ENCODE measurements at regions of chr18 and their contacts with region 1.

Region 1: DNA sequence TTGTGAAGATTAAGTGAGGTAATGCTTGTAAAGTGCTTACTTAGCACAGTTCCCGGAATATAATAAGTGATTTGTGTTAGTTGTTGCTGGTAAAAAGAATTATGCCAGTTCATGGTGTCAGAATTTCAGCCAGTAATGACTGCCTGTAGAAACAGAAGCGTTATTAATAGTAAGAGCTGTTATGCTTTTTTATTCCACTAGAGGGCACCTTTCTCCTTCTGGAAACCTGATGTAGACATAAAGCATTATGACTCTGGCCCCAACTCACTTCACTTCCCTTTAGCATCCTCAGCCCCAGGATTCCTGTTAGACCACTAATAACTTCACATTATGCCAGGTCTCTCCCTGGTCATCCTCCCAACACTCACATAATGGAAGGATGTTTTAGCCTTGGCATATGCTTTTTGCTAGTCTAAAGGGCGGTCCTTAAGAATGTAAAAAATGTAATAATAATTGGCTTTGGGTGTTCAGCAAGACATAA is 34.9 kb downstream of the C18orf54 start:
- DNase-seq: peak; percentile 52
- ATAC-seq: peak; percentile 64
- H3K4me3 ChIP-seq: no peak overlapping the region
- H3K27ac ChIP-seq: no peak overlapping the region
- H3K4me1 ChIP-seq: peaks cover 25% of the 10 kb centered on the region
- H3K27me3 ChIP-seq: no peaks in the 10 kb centered on the region; a peak in 1 of 5 replicates
- CTCF ChIP-seq: peak; percentile 66
- EP300 ChIP-seq: no peak
- POLR2A ChIP-seq: no peak
- RAD21 ChIP-seq: no peak

Region 2: DNA sequence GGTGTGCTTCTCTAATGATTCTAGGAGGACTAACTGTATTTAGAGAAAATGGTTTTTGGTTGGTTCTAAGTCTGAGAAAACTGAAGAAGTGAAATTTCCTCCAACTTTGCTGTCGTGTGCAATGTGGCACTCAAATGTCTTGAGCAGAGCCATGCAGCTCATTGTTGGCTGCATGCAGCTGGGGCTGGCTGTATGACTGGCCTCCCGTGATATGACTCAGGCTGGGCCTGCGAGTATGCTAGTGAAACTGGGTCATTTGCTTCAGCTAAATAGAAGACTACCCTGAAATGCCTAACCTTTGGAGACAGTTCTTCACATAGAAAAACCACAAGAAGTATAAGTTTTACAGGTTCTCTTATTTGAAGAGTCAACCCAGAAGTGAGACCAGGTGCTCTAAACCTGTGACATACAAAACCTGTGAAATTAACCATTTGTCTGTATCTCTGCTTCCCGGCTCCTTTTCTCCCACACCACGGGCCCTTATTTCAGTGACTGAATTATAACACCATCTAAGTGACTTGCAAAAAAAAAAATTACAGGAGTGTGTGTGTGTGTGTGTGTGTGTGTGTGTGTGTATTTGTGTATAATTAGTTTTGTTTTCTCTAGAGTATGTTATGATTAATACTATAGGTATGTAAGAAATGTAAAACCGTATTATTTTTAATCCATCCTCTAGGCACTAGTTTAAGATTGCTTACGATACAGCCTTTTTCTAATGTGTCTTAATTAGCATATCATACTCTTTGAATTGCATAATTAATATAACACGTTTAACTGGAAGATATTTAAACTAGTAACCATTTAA is 107.4 kb before region 1 on chr18:
- CTCF ChIA-PET with region 1: no interaction called
- POLR2A ChIA-PET with region 1: no interaction called
- in situ Hi-C with region 1: no loop called
- intact Hi-C with region 1: no loop called
- DNase-seq: no peak
- ATAC-seq: no peak
- H3K4me3 ChIP-seq: no peak overlapping the region
- H3K27ac ChIP-seq: no peak overlapping the region
- H3K4me1 ChIP-seq: peaks cover 4% of the 10 kb centered on the region
- H3K27me3 ChIP-seq: no peaks in the 10 kb centered on the region
- CTCF ChIP-seq: no peak
- EP300 ChIP-seq: no peak
- POLR2A ChIP-seq: no peak
- RAD21 ChIP-seq: no peak

Region 3: DNA sequence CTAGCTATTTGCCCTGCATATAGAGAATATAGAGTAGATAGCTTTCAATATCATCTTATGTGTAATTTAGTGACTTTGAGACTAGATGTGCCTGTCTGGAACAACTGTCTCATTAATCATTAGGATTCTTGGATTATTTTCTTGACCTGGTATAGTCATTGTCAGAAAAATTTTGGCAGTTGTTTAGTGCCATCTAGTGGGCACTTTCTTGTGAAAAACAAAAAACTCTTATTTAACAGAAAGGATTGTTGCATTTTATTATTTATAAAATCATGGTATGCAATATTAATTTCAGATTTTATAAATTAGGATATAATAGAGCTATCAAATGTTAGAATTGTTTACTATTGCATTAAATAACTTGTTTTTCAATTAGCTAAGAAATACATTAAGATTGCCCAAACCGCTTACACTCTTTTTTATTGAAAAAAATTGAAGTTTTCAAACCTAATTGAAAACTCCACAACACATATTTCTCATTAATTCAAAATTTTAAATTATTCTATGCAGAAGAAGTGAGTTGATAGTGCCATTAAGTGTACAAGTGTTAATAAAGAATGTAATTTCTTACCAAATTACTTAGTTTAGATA is 278.8 kb after region 1 on chr18:
- CTCF ChIA-PET with region 1: no interaction called
- POLR2A ChIA-PET with region 1: no interaction called
- in situ Hi-C with region 1: no loop called
- intact Hi-C with region 1: loop called (anchors 1 kb)
- DNase-seq: peak; percentile 19
- ATAC-seq: no peak
- H3K4me3 ChIP-seq: no peak overlapping the region
- H3K27ac ChIP-seq: no peak overlapping the region
- H3K4me1 ChIP-seq: no peaks in the 10 kb centered on the region
- H3K27me3 ChIP-seq: no peaks in the 10 kb centered on the region
- CTCF ChIP-seq: peak; percentile 47
- EP300 ChIP-seq: no peak
- POLR2A ChIP-seq: no peak
- RAD21 ChIP-seq: no peak

Region 4: DNA sequence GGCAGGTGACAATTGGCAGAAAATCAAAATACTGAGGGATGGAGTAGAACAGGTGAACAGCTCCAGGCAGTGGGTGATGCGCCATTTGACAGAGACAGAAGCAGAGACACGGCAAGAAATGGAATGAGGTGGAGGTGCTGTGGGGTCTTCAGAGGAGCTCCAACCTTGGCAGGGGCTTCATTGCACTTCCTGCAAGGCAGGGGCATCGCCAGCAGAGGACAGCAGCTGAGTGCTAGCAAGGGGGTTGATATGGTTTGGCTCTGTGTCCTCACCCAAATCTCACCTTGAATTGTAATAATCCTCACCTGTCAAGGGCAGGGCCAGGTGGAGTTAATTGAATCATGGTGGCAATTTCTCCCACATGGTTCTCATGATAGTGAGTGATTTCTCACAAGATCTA is 523.9 kb after region 1 on chr18:
- CTCF ChIA-PET with region 1: no interaction called
- POLR2A ChIA-PET with region 1: no interaction called
- in situ Hi-C with region 1: no loop called
- intact Hi-C with region 1: no loop called
- DNase-seq: no peak
- ATAC-seq: peak; percentile 47; the same call in 2 of the 3 replicates
- H3K4me3 ChIP-seq: no peak overlapping the region
- H3K27ac ChIP-seq: no peak overlapping the region
- H3K4me1 ChIP-seq: no peaks in the 10 kb centered on the region
- H3K27me3 ChIP-seq: no peaks in the 10 kb centered on the region
- CTCF ChIP-seq: peak; percentile 53
- EP300 ChIP-seq: no peak
- POLR2A ChIP-seq: no peak
- RAD21 ChIP-seq: no peak

Region 5: GRCh38 chr18:54958657-54959625 is 566.4 kb after region 1 on chr18 and contains the start of gene CCDC68:
- CTCF ChIA-PET with region 1: no interaction called
- POLR2A ChIA-PET with region 1: no interaction called
- in situ Hi-C with region 1: no loop called
- intact Hi-C with region 1: loop called (anchors 10 kb)
- DNase-seq: peak; percentile 50
- ATAC-seq: peak; percentile 100
- H3K4me3 ChIP-seq: peak within 1 kb of the TSS; percentile 71 to 81 (median 79)
- H3K27ac ChIP-seq: peak within 1 kb of the TSS; percentile 69
- H3K4me1 ChIP-seq: peaks cover 44% of the 10 kb centered on the region
- H3K27me3 ChIP-seq: peaks cover 0 to 3% of the 10 kb centered on the region in 2 experiments; a peak in 1 of 5 replicates
- CTCF ChIP-seq: no peak
- EP300 ChIP-seq: peak in 1 of 2 experiments; percentile 37; a peak in 1 of 4 replicates
- POLR2A ChIP-seq: peak in 1 of 2 experiments; percentile 77; a peak in 2 of 4 replicates
- RAD21 ChIP-seq: peak; percentile 30
- total RNA-seq, gene CCDC68: 4.6 and 4.9 TPM in 2 replicates

Measured in HepG2 (cell line).